Prostate gland (tissue), 2 donors: ENCODE measurements at regions of chr18 and their contacts with region 1.

Region 1: GRCh38 chr18:23982155-23983079 is 32.1 kb upstream of the TTC39C start:
- DNase-seq: no peak
- H3K4me3 ChIP-seq: no peak overlapping the region
- H3K27ac ChIP-seq: no peak overlapping the region
- H3K4me1 ChIP-seq: no peaks in the 10 kb centered on the region
- H3K27me3 ChIP-seq: no peaks in the 10 kb centered on the region
- CTCF ChIP-seq: no peak
- POLR2A ChIP-seq: no peak

Region 2: GRCh38 chr18:23934252-23934651 is 48.2 kb before region 1 on chr18:
- intact Hi-C with region 1: loop called (anchors 5 kb)
- DNase-seq: no peak
- H3K4me3 ChIP-seq: no peak overlapping the region
- H3K27ac ChIP-seq: no peak overlapping the region
- H3K4me1 ChIP-seq: no peaks in the 10 kb centered on the region
- H3K27me3 ChIP-seq: no peaks in the 10 kb centered on the region
- CTCF ChIP-seq: no peak
- POLR2A ChIP-seq: no peak